ENCODE measurements at regions of chr7 and their contacts with region 1.

Region 1: DNA sequence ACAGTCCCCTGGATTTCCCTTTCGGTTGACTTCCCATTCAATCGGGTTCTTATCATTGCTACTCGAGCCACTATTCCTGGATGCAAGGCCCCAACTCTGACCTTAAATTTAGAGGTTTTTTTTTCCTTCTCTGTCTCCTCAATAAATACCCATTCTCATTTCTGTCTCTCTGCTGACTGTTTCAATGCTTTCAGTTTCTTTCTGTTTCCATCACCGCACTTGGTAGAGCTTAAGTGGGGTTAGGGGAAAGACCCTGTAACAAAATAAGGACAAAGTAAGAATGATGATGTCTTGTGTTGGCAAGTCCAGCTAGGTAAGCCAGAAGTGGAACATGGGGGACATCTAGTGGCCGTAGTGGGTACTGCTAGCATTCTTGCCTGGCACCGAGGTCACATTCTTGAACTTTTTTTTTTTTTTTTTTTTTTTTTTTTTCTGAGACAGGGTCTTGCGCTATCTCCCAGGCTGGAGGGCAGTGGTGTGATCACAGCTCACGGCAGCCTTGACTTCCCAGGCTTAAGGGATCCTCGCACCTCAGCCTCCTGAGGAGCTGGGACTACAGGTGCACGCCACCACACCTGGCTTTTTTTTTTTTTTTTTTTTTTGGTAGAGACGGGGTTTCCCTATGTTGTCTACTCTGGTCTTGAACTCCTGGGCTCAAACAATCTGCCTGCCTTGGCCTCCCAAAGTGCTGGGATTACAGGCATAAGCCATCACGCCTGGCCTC is 40.3 kb downstream of the ZC3HC1 start:
- DNase-seq: peak; percentile 86
- H3K4me3 Mint-ChIP-seq: peak overlapping the region; percentile 2
- H3K27ac Mint-ChIP-seq: peak overlapping the region; percentile 86
- H3K4me1 Mint-ChIP-seq: peaks cover 21% of the 10 kb centered on the region
- H3K27me3 Mint-ChIP-seq: no peaks in the 10 kb centered on the region
- CTCF ChIP-seq: peak; percentile 69

Region 2: DNA sequence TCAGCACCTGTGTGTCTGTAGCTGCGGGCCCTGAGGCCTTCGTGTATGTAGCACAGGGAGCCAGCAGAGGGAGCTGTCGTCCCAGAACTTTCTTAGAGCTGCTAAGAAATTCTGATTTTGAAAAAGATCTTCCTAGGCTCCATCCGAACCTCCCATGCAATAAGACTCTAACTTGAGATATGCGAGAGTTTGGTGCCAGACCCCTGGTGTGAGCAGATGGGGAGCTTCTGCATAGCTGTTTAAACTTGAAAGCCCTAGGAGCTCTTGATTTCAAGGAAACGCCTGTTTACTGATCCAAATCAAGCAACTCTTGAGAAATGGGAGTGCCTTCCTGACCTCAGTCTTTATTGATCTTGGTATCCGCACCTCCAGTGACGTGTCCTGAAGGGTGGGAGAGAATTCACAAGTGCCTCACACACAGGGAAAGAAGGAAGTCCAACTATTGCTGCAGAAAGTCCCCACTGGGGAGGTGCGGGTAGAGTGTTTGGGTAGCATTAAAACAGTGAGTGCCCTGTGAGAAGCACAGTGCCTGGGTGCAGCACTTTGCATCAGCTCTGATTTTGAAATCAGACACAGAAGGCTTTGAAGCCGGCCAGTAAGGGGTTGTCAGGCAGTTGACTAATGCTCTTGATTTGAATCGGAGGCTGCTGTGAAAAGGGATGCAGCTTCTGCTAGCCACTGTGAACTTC is 643.0 kb before region 1 on chr7:
- CTCF ChIA-PET with region 1: interaction called, 3 read pairs
- POLR2A ChIA-PET with region 1: no interaction called
- intact Hi-C with region 1: loop called (anchors 5 kb)
- DNase-seq: peak; percentile 73
- H3K4me3 Mint-ChIP-seq: no peak overlapping the region
- H3K27ac Mint-ChIP-seq: no peak overlapping the region
- H3K4me1 Mint-ChIP-seq: no peaks in the 10 kb centered on the region
- H3K27me3 Mint-ChIP-seq: no peaks in the 10 kb centered on the region
- CTCF ChIP-seq: peak; percentile 86

Region 3: DNA sequence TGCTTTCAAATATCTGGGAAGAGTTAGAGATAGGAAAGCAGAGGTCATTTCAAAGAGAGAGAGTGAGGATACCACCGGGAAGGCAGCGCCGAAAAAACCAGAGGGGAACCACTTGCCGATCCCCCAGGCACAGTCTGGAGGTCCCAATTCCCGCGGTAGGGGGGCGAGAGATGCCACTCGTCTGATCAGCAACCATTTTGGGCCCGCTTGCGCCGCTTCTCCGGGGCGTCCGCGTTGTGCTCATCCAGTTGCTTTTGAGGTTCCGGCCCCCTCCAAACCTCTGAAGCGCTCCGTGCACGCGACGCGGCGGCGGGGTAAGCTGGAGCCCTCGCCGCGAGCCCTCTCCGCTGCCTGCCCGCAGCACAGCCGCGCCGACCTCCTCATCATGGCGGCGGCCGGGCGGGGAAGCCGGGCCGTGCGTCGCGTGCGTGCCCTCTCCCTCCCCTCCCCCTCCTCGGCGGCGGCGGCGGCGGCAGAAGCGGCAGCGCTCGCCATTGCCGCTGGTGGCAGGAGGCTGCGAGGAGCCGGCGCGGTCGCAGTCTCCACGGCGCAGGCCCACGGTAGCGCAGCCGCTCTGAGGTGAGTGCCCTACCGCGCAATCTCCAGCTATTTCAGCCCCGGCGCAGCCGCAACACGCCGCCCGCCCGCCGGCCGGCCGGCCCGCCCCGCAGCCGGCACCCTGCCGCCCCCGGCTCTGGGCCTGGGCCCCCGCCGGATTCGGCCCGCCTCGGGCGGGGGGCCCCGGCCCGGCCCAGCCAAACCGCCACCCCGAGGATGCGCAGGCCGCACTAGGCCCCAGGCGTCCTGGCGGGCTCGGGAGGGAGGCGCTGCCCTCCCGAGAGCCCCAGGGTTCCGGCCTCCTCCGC is 399.4 kb before region 1 on chr7 and contains the start of gene NRF1:
- CTCF ChIA-PET with region 1: interaction called, 4 read pairs
- POLR2A ChIA-PET with region 1: interaction called, 3 read pairs
- intact Hi-C with region 1: loop called (anchors 5 kb)
- DNase-seq: peak; percentile 86
- H3K4me3 Mint-ChIP-seq: peak within 1 kb of the TSS; percentile 91
- H3K27ac Mint-ChIP-seq: peak within 1 kb of the TSS; percentile 94
- H3K4me1 Mint-ChIP-seq: peaks cover 5% of the 10 kb centered on the region
- H3K27me3 Mint-ChIP-seq: no peaks in the 10 kb centered on the region
- CTCF ChIP-seq: no peak
- total RNA-seq, gene NRF1: 18.4 and 21.4 TPM in 2 replicates

Region 4: GRCh38 chr7:129780257-129780973 is 230.4 kb before region 1 on chr7:
- CTCF ChIA-PET with region 1: interaction called, 4 read pairs
- POLR2A ChIA-PET with region 1: interaction called, 3 read pairs
- intact Hi-C with region 1: loop called (anchors 2 kb)
- DNase-seq: peak; percentile 91
- H3K4me3 Mint-ChIP-seq: peak overlapping the region; percentile 68
- H3K27ac Mint-ChIP-seq: no peak overlapping the region
- H3K4me1 Mint-ChIP-seq: no peaks in the 10 kb centered on the region
- H3K27me3 Mint-ChIP-seq: no peaks in the 10 kb centered on the region
- CTCF ChIP-seq: no peak

Region 5: GRCh38 chr7:129853661-129854300 is 157.1 kb before region 1 on chr7:
- CTCF ChIA-PET with region 1: interaction called, 3 read pairs
- POLR2A ChIA-PET with region 1: interaction called, 9 read pairs
- intact Hi-C with region 1: loop called (anchors 2 kb)
- DNase-seq: peak; percentile 97
- H3K4me3 Mint-ChIP-seq: peak overlapping the region; percentile 54
- H3K27ac Mint-ChIP-seq: peak overlapping the region; percentile 92
- H3K4me1 Mint-ChIP-seq: peaks cover 52% of the 10 kb centered on the region
- H3K27me3 Mint-ChIP-seq: no peaks in the 10 kb centered on the region
- CTCF ChIP-seq: no peak

Region 6: GRCh38 chr7:129952653-129953560 is 57.9 kb before region 1 on chr7 and contains the start of gene UBE2H:
- CTCF ChIA-PET with region 1: interaction called, 47 read pairs
- POLR2A ChIA-PET with region 1: interaction called, 187 read pairs
- intact Hi-C with region 1: loop called (anchors 1 kb)
- DNase-seq: peak; percentile 92
- H3K4me3 Mint-ChIP-seq: no peak within 1 kb of the TSS
- H3K27ac Mint-ChIP-seq: no peak within 1 kb of the TSS
- H3K4me1 Mint-ChIP-seq: peaks cover 9% of the 10 kb centered on the region
- H3K27me3 Mint-ChIP-seq: no peaks in the 10 kb centered on the region
- CTCF ChIP-seq: no peak
- total RNA-seq, gene UBE2H: 128 and 130 TPM in 2 replicates

Region 7: GRCh38 chr7:129969807-129970446 is 40.9 kb before region 1 on chr7:
- CTCF ChIA-PET with region 1: interaction called, 20 read pairs
- POLR2A ChIA-PET with region 1: interaction called, 29 read pairs
- intact Hi-C with region 1: no loop called
- DNase-seq: peak; percentile 91
- H3K4me3 Mint-ChIP-seq: peak overlapping the region; percentile 46
- H3K27ac Mint-ChIP-seq: peak overlapping the region; percentile 88
- H3K4me1 Mint-ChIP-seq: peaks cover 33% of the 10 kb centered on the region
- H3K27me3 Mint-ChIP-seq: no peaks in the 10 kb centered on the region
- CTCF ChIP-seq: no peak